B cell (primary cell): ENCODE measurements at regions of chr2 and their contacts with region 1.

Region 1: DNA sequence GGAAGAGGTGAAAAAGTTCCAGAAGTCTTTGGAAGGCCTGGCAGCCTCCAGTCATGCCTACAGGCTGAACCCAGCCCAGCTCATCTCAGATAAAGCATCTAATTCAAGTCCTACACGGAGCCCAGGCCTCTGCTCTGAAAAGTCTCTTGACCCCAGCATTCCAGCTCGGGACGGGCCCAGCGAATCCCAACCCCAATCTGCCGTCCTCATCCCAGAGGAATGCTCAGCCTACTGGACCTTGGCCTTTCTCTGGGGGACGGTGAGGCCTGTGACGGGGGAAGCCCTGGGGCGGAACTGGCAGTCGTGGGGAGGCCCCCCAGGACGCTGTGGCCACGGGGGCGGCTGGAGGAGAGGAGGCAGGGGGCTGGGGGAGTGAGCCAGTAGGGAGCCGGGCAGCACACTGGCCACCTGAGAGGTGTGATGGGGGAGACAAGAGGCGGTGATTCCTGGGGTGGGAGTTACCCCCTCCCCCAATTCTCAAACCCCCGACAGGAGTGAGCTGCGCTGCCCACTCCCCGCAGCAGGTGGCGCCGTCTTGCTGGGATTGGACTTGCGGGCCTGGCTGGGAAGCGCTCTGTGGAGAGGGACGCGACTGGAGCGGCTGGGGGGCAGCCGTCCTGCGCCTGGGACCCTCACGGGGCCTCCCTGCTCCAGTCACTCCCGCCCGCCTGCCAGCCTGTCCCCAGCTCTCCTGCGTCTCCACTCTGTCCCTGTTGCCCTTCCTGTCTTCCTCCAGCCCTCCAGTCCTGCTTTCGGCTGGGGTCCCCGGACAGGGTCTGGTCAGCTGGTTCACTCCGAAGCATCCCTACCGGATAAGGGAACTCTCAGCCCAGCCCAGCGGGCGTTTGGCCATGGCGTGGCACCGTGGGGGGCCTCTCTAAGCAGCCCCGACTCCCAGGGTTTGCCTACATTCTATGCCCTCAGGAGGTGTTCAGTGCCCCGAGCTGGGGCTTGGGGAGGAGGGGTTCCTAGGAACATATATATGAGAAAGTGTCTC is 182.6 kb upstream of the HAAO start:
- DNase-seq: peak; percentile 69
- ATAC-seq: peak; percentile 78
- H3K4me3 ChIP-seq: no peak overlapping the region
- H3K4me3 Mint-ChIP-seq: peak overlapping the region; percentile 26
- H3K27ac ChIP-seq: no peak overlapping the region
- H3K27ac Mint-ChIP-seq: no peak overlapping the region
- H3K4me1 ChIP-seq: peaks cover 30 to 31% of the 10 kb centered on the region in 2 donors
- H3K4me1 Mint-ChIP-seq: peaks cover 35% of the 10 kb centered on the region
- H3K27me3 ChIP-seq: peaks cover 0 to 3% (median 0%) of the 10 kb centered on the region in 4 experiments
- H3K27me3 Mint-ChIP-seq: no peaks in the 10 kb centered on the region
- CTCF ChIP-seq: peak; percentile 75

Region 2: GRCh38 chr2:42935692-42936681 is 39.0 kb before region 1 on chr2:
- CTCF ChIA-PET with region 1: no interaction called
- POLR2A ChIA-PET with region 1: no interaction called
- intact Hi-C with region 1: no loop called
- DNase-seq: no peak
- ATAC-seq: no peak
- H3K4me3 ChIP-seq: no peak overlapping the region
- H3K4me3 Mint-ChIP-seq: no peak overlapping the region
- H3K27ac ChIP-seq: no peak overlapping the region
- H3K27ac Mint-ChIP-seq: no peak overlapping the region
- H3K4me1 ChIP-seq: no peaks in the 10 kb centered on the region
- H3K4me1 Mint-ChIP-seq: no peaks in the 10 kb centered on the region
- H3K27me3 ChIP-seq: no peaks in the 10 kb centered on the region
- H3K27me3 Mint-ChIP-seq: peaks cover 5% of the 10 kb centered on the region
- CTCF ChIP-seq: no peak

Region 3: GRCh38 chr2:43142921-43143438 is 168.0 kb after region 1 on chr2:
- CTCF ChIA-PET with region 1: no interaction called
- POLR2A ChIA-PET with region 1: no interaction called
- intact Hi-C with region 1: no loop called
- DNase-seq: peak; percentile 17
- ATAC-seq: no peak
- H3K4me3 ChIP-seq: no peak overlapping the region
- H3K4me3 Mint-ChIP-seq: no peak overlapping the region
- H3K27ac ChIP-seq: no peak overlapping the region
- H3K27ac Mint-ChIP-seq: peak overlapping the region; percentile 23
- H3K4me1 ChIP-seq: peaks cover 21 to 24% of the 10 kb centered on the region in 2 donors
- H3K4me1 Mint-ChIP-seq: peaks cover 27% of the 10 kb centered on the region
- H3K27me3 ChIP-seq: no peaks in the 10 kb centered on the region
- H3K27me3 Mint-ChIP-seq: no peaks in the 10 kb centered on the region
- CTCF ChIP-seq: no peak

Region 4: GRCh38 chr2:43239981-43240761 is 265.2 kb after region 1 on chr2:
- CTCF ChIA-PET with region 1: interaction called, 15 read pairs
- POLR2A ChIA-PET with region 1: no interaction called
- intact Hi-C with region 1: no loop called
- DNase-seq: peak; percentile 59
- ATAC-seq: peak; percentile 87
- H3K4me3 ChIP-seq: peak overlapping the region in 1 of 5 experiments; percentile 17
- H3K4me3 Mint-ChIP-seq: peak overlapping the region; percentile 67
- H3K27ac ChIP-seq: peak overlapping the region; percentile 63 to 89
- H3K27ac Mint-ChIP-seq: peak overlapping the region; percentile 97
- H3K4me1 ChIP-seq: peaks cover 26 to 37% of the 10 kb centered on the region in 2 donors
- H3K4me1 Mint-ChIP-seq: peaks cover 48% of the 10 kb centered on the region
- H3K27me3 ChIP-seq: no peaks in the 10 kb centered on the region
- H3K27me3 Mint-ChIP-seq: no peaks in the 10 kb centered on the region
- CTCF ChIP-seq: no peak